ENCODE measurements at regions of chr2 and their contacts with region 1.

Region 1: GRCh38 chr2:117835990-117836760 is 21.7 kb downstream of the DDX18 start:
- DNase-seq: peak; percentile 81 to 95 (median 88)
- H3K4me3 ChIP-seq: peak overlapping the region; percentile 62 to 71 (median 66)
- H3K27ac ChIP-seq: no peak overlapping the region
- H3K4me1 ChIP-seq: peaks cover 0 to 4% (median 0%) of the 10 kb centered on the region in 3 donors
- H3K27me3 ChIP-seq: no peaks in the 10 kb centered on the region
- CTCF ChIP-seq: peak; percentile 63

Region 2: GRCh38 chr2:117997872-117998454 is 161.8 kb after region 1 on chr2:
- intact Hi-C with region 1: loop called (anchors 10 kb)
- DNase-seq: no peak
- H3K4me3 ChIP-seq: no peak overlapping the region
- H3K27ac ChIP-seq: no peak overlapping the region
- H3K4me1 ChIP-seq: peaks cover 0 to 3% (median 2%) of the 10 kb centered on the region in 3 donors
- H3K27me3 ChIP-seq: no peaks in the 10 kb centered on the region
- CTCF ChIP-seq: no peak

Measured in kidney (tissue), 22 donors.